CD4-positive, alpha-beta T cell (primary cell): ENCODE measurements at regions of chr1 and their contacts with region 1.

Region 1: DNA sequence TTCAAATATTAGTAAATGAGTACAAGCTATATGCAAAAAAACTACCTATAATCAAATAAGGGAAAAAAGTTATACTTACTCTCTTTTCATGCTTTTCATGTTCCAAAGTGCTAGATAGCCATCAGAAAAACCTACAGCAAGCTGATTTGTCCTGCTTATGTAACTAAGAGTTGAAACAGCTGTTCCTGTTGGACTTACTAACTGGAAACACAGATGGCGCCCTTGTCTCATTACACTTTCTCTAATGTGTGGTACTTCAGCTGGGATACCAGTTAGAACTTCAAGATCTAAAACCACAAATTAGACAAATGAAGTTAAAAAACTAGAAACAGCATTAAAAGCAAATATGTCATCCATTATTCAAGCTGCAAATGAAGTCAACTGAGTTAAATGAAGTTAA is 24.3 kb downstream of the AHCTF1 start:
- DNase-seq: peak in 4 of 14 experiments; percentile 36 to 65 (median 54)
- ATAC-seq: peak; percentile 54
- H3K4me3 ChIP-seq: no peak overlapping the region
- H3K4me3 Mint-ChIP-seq: no peak overlapping the region
- H3K27ac ChIP-seq: no peak overlapping the region
- H3K27ac Mint-ChIP-seq: no peak overlapping the region
- H3K4me1 ChIP-seq: no peaks in the 10 kb centered on the region
- H3K4me1 Mint-ChIP-seq: peaks cover 10% of the 10 kb centered on the region
- H3K27me3 ChIP-seq: no peaks in the 10 kb centered on the region
- H3K27me3 Mint-ChIP-seq: no peaks in the 10 kb centered on the region
- CTCF ChIP-seq: peak; percentile 25

Region 2: DNA sequence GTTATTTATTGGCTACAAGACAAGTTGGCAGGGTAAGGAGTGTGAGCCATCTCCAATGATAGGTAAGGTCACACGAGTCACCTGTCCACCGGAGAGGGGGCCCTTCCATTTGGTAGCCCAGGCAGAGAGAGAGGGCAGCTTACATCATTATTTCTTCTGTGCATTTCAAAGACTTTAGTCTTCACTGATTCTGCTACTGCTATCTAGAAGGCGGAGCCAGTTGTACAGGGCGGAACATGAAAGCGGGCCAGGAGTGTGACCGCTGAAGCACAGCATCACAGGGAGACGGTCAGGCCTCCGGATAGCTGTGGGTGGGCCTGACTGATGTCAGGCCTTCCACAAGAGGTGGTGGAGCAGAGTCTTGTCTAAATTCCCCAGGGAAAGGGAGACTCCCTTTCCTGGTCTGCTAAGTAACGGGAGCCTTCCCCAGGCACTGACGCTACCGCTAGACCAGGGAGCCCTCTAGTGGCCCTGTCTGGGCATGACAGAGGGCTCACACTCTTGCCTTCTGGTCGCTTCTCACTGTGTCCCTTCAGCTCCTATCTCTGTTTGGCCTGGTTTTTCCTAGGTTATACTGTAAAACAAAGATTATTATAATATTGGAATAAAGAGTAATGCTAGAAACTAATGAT is 63.7 kb after region 1 on chr1:
- CTCF ChIA-PET with region 1: no interaction called
- POLR2A ChIA-PET with region 1: no interaction called
- intact Hi-C with region 1: loop called (anchors 5 kb)
- DNase-seq: peak in 12 of 14 experiments; percentile 4 to 63 (median 21)
- ATAC-seq: no peak
- H3K4me3 ChIP-seq: no peak overlapping the region
- H3K4me3 Mint-ChIP-seq: no peak overlapping the region
- H3K27ac ChIP-seq: no peak overlapping the region
- H3K27ac Mint-ChIP-seq: no peak overlapping the region
- H3K4me1 ChIP-seq: no peaks in the 10 kb centered on the region
- H3K4me1 Mint-ChIP-seq: no peaks in the 10 kb centered on the region
- H3K27me3 ChIP-seq: no peaks in the 10 kb centered on the region
- H3K27me3 Mint-ChIP-seq: peaks cover 5% of the 10 kb centered on the region
- CTCF ChIP-seq: peak; percentile 78

Region 3: GRCh38 chr1:247487057-247487456 is 579.6 kb after region 1 on chr1:
- CTCF ChIA-PET with region 1: no interaction called
- POLR2A ChIA-PET with region 1: no interaction called
- intact Hi-C with region 1: loop called (anchors 2 to 10 kb)
- DNase-seq: peak in 10 of 14 experiments; percentile 2 to 76 (median 14)
- ATAC-seq: peak; percentile 77
- H3K4me3 ChIP-seq: no peak overlapping the region
- H3K4me3 Mint-ChIP-seq: no peak overlapping the region
- H3K27ac ChIP-seq: no peak overlapping the region
- H3K27ac Mint-ChIP-seq: no peak overlapping the region
- H3K4me1 ChIP-seq: no peaks in the 10 kb centered on the region
- H3K4me1 Mint-ChIP-seq: no peaks in the 10 kb centered on the region
- H3K27me3 ChIP-seq: peaks cover 0 to 5% of the 10 kb centered on the region in 2 experiments
- H3K27me3 Mint-ChIP-seq: peaks cover 10% of the 10 kb centered on the region
- CTCF ChIP-seq: peak; percentile 76